A549 (cell line): ENCODE measurements at regions of chr20 and their contacts with region 1.

Region 1: GRCh38 chr20:32902456-32903420 is 44.0 kb downstream of the EFCAB8 start:
- DNase-seq: peak; percentile 58 to 66
- ATAC-seq: peak; percentile 77 to 92; a peak in 5 of 6 replicates
- H3K4me3 ChIP-seq: no peak overlapping the region
- H3K27ac ChIP-seq: no peak overlapping the region
- H3K4me1 ChIP-seq: no peaks in the 10 kb centered on the region
- CTCF ChIP-seq: peak; percentile 86
- EP300 ChIP-seq: no peak
- POLR2A ChIP-seq: no peak
- RAD21 ChIP-seq: peak; percentile 89 to 94

Region 2: DNA sequence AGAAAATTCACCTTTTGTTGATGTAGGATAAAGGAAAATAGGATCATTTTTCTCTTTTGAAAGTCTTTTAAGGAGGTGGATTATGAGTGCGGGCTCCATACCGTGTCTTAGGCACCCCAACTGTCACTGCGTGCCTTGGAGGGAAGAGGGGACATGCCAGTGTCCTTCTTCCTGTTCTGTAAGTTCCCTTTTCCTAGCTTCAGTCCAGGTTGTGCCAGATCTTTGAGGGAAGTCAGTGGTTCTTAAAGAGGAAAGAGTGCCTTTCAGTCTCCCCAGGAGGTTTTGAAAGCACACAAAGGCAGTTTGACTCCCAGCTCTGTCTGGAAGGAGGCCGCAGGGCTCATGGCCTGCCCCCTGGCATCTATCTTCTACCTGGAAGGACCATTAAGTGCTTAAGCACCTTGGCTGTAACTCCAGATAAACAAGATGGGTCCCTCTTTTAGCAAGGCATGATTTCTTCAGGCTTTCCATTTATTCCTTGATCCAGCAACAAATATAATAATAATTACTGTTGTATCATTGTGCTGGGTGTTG is 31.0 kb before region 1 on chr20:
- CTCF ChIA-PET with region 1: no interaction called
- POLR2A ChIA-PET with region 1: no interaction called
- DNase-seq: no peak
- ATAC-seq: no peak
- H3K4me3 ChIP-seq: no peak overlapping the region
- H3K27ac ChIP-seq: no peak overlapping the region
- H3K4me1 ChIP-seq: no peaks in the 10 kb centered on the region
- CTCF ChIP-seq: no peak
- EP300 ChIP-seq: no peak
- POLR2A ChIP-seq: no peak
- RAD21 ChIP-seq: no peak

Region 3: DNA sequence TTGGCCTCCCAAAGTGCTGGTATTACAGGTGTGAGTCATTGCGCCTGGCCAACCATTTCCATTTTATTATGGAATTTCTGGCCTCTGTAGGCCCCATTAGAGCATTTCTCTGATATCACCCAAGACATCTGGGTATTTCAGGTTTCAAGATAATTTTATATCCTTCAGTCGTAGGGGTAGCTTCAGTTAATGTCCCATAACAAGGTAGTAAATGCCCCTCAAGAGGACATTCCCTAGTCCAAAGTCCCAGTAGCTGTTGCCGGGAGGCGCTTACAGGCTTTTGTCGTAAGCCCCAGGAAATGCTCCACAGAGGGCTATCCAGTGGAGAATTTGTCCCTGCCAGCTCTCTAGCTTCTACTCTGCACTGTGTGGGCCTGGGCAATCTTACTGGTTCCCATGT is 19.7 kb before region 1 on chr20:
- CTCF ChIA-PET with region 1: interaction called, 10 read pairs
- POLR2A ChIA-PET with region 1: no interaction called
- DNase-seq: no peak
- ATAC-seq: no peak
- H3K4me3 ChIP-seq: no peak overlapping the region
- H3K27ac ChIP-seq: no peak overlapping the region
- H3K4me1 ChIP-seq: no peaks in the 10 kb centered on the region
- CTCF ChIP-seq: no peak
- EP300 ChIP-seq: no peak
- POLR2A ChIP-seq: no peak
- RAD21 ChIP-seq: no peak

Region 4: GRCh38 chr20:32945710-32946221 is 43.0 kb after region 1 on chr20:
- CTCF ChIA-PET with region 1: interaction called, 28 read pairs
- POLR2A ChIA-PET with region 1: no interaction called
- DNase-seq: peak in 1 of 2 experiments; percentile 23
- ATAC-seq: peak; percentile 72 to 78; a peak in 5 of 6 replicates
- H3K4me3 ChIP-seq: no peak overlapping the region
- H3K27ac ChIP-seq: no peak overlapping the region
- H3K4me1 ChIP-seq: no peaks in the 10 kb centered on the region
- CTCF ChIP-seq: peak; percentile 37; the same call in 2 of the 3 replicates
- EP300 ChIP-seq: no peak
- POLR2A ChIP-seq: no peak
- RAD21 ChIP-seq: peak; percentile 27 to 32; a peak in 3 of 5 replicates

Region 5: GRCh38 chr20:33211817-33212424 is 309.2 kb after region 1 on chr20:
- CTCF ChIA-PET with region 1: interaction called, 13 read pairs
- POLR2A ChIA-PET with region 1: no interaction called
- DNase-seq: peak; percentile 83 to 84
- ATAC-seq: peak; percentile 91 to 98
- H3K4me3 ChIP-seq: no peak overlapping the region
- H3K27ac ChIP-seq: no peak overlapping the region
- H3K4me1 ChIP-seq: no peaks in the 10 kb centered on the region
- CTCF ChIP-seq: peak; percentile 55
- EP300 ChIP-seq: no peak
- POLR2A ChIP-seq: no peak
- RAD21 ChIP-seq: peak; percentile 64 to 72

Region 6: DNA sequence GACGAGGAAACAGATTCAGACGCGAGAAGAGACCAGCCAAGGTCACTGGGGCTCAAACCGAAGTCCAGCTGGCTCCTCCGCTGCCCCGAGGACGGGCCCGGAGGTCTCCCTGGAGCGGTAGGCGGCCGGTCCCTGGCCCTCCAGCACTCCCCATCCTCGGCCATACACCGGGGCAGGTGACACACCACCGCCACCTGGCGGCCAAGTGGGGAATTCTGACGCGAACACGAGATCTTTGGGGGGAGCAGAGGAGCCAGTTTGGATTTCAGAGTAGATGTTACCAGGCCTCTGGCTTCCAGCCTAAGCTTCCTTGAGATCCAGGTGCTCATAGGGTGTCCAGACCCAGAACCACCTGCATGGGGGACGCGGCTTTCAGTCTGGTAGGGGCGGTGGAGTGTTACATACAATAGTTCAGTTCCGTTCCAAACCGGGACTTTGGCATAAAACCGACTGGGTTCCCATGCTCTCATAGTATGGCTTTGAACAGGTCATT is 396.4 kb after region 1 on chr20:
- CTCF ChIA-PET with region 1: interaction called, 14 read pairs
- POLR2A ChIA-PET with region 1: no interaction called
- DNase-seq: peak; percentile 54 to 72
- ATAC-seq: peak; percentile 77 to 94
- H3K4me3 ChIP-seq: no peak overlapping the region
- H3K27ac ChIP-seq: no peak overlapping the region
- H3K4me1 ChIP-seq: 0 out of 3 replicates have a peak, but pooled peaks cover 3% of the 10 kb centered on the region
- CTCF ChIP-seq: peak; percentile 79
- EP300 ChIP-seq: no peak
- POLR2A ChIP-seq: no peak
- RAD21 ChIP-seq: peak; percentile 75 to 81